H1 (cell line): ENCODE measurements at regions of chr7 and their contacts with region 1.

Region 1: DNA sequence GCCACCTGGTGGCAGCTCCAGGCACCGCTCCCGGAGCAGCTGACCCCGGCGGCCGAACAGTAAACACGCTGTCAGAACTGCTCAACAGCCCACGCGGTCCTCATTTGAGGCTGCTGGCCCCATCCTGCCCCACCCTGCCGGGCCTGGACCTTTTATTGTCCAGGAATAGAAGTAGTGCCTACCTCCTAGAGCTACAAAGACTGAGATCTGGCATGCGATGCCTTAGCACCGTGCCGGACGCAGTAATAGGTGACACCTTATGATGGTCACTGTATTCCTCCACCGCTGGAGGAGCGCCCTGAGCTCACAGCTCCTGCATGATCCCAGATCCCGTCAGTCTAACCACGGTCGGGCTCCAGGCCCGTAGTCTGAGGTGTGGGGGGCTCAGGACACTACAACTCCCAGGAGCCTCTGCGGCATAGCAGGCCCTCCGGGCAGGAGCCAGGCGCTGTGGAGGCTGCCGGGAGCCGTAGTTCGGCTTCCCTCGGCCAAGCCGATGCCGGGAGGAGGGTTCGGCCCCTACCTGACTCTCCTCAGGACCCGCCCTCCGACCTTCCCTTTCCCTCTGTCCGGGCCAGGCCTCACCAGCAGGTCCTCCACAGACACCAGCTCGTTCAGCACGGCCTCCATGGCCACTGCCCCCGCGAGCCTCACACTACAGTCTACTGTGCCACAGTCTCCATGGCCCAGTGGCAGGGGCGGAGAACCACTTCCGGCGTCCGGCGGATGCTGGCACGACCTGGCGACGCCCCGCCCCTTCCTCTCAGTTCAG is at the start of gene FIS1:
- DNase-seq: peak; percentile 76 to 98
- H3K4me3 ChIP-seq: peak within 1 kb of the TSS; percentile 80 to 99 (median 98)
- H3K27ac ChIP-seq: peak within 1 kb of the TSS; percentile 61; the same call in 1 of the 2 replicates
- H3K4me1 ChIP-seq: peaks cover 0 to 6% (median 3%) of the 10 kb centered on the region in 4 experiments; a peak in 5 of 7 replicates
- H3K27me3 ChIP-seq: no peaks in the 10 kb centered on the region
- CTCF ChIP-seq: peak in 2 of 3 experiments; percentile 83 to 91; a peak in 3 of 4 replicates
- EP300 ChIP-seq: no peak
- POLR2A ChIP-seq: no peak
- RAD21 ChIP-seq: peak in 1 of 2 experiments; percentile 54; a peak in 3 of 4 replicates
- total RNA-seq, gene FIS1: 122 and 128 TPM in 2 replicates

Region 2: GRCh38 chr7:101134399-101135030 is 110.0 kb before region 1 on chr7:
- CTCF ChIA-PET with region 1: no interaction called
- POLR2A ChIA-PET with region 1: no interaction called
- DNase-seq: no peak
- H3K4me3 ChIP-seq: no peak overlapping the region; a peak in 2 of 8 replicates
- H3K27ac ChIP-seq: no peak overlapping the region
- H3K4me1 ChIP-seq: peaks cover 2 to 14% (median 6%) of the 10 kb centered on the region in 4 experiments; a peak in 6 of 7 replicates
- H3K27me3 ChIP-seq: peaks cover 0 to 2% (median 0%) of the 10 kb centered on the region in 4 experiments; a peak in 1 of 7 replicates
- CTCF ChIP-seq: no peak
- EP300 ChIP-seq: no peak
- POLR2A ChIP-seq: no peak
- RAD21 ChIP-seq: no peak

Region 3: DNA sequence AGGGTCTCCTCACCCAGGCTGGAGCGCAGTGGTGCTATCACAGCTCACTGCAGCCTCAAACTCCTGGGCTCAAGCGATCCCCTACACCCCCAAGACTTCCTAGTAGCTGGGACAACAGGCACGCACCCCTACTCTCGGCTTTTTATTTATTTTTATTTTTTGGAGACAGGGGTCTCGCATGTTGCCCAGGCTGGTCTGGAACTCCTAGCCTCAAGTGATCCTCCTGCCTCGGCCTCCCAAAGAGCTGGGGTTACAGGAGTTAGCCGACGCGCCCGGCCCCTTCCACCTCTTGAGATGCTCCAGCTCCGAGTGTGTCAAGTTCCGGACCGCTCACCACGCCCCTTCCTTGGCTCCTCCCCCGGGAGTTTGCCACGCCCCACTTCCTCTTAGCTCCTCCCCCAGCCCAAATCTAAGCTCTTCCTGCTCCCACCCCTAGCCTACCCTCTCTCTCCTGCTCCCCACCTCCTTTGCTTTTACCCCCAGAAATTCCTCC is 70.8 kb before region 1 on chr7:
- CTCF ChIA-PET with region 1: interaction called, 10 read pairs
- POLR2A ChIA-PET with region 1: interaction called, 3 read pairs
- DNase-seq: peak in 1 of 2 experiments; percentile 98
- H3K4me3 ChIP-seq: peak overlapping the region; percentile 31 to 68 (median 51); a peak in 7 of 8 replicates
- H3K27ac ChIP-seq: no peak overlapping the region
- H3K4me1 ChIP-seq: peaks cover 6 to 48% (median 34%) of the 10 kb centered on the region in 4 experiments
- H3K27me3 ChIP-seq: peaks cover 64 to 99% (median 91%) of the 10 kb centered on the region in 4 experiments
- CTCF ChIP-seq: no peak
- EP300 ChIP-seq: no peak
- POLR2A ChIP-seq: no peak
- RAD21 ChIP-seq: no peak

Region 4: DNA sequence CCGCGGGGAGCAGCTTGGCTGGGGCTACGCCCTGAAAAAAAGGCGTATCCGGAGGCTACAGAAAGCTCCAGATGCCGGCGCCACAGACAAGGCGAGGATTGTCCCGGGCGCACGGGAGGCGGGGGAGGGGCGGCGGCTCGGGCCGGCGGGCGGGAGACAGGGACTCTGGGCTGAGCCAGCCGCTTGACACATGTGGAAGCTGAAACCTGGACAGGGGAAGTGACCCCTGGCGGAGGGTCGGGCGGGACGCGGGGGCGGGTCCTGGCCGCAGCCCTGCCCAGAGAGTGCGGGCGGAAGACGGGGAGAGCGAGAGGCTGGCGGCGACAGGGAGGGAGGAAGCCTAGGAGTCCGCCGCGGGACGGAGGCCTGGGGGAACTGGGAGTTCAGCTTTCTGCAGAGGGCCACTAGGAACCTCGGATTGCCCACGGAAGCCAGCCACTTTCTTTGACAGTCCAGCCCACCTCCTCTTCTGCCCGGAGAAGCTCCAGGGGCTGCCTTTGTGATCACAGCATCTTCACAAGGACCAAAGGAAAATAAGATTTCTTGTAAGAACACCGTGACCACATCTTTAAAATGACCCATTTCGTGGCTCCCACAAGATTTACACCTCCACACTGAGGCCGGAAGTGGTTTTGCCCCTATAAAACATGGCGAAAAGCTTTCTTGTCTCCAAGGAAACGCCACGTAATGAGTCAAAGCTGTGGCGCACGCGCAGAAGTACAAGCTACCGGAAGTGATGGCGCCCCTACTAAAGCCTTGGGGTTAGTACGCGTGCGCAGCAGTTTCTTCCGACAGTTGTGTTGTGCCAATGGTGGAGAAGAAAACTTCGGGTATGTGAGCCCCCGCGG is 26.9 kb before region 1 on chr7 and contains the starts of genes PLOD3 and ZNHIT1:
- CTCF ChIA-PET with region 1: interaction called, 79 read pairs
- POLR2A ChIA-PET with region 1: interaction called, 28 read pairs
- DNase-seq: peak; percentile 83 to 95
- H3K4me3 ChIP-seq: peak within 1 kb of the TSS; percentile 74 to 83 (median 78)
- H3K27ac ChIP-seq: peak within 1 kb of the TSS; percentile 37; the same call in 1 of the 2 replicates
- H3K4me1 ChIP-seq: peaks cover 0 to 13% (median 7%) of the 10 kb centered on the region in 4 experiments; a peak in 5 of 7 replicates
- H3K27me3 ChIP-seq: no peaks in the 10 kb centered on the region
- CTCF ChIP-seq: peak; percentile 27 to 34 (median 28)
- EP300 ChIP-seq: no peak
- POLR2A ChIP-seq: peak in 1 of 2 experiments; percentile 57; a peak in 2 of 3 replicates
- RAD21 ChIP-seq: peak in 1 of 2 experiments; percentile 28; a peak in 3 of 4 replicates
- total RNA-seq, gene PLOD3: 43.1 and 47.2 TPM in 2 replicates
- total RNA-seq, gene ZNHIT1: 59.9 and 61.7 TPM in 2 replicates

Region 5: DNA sequence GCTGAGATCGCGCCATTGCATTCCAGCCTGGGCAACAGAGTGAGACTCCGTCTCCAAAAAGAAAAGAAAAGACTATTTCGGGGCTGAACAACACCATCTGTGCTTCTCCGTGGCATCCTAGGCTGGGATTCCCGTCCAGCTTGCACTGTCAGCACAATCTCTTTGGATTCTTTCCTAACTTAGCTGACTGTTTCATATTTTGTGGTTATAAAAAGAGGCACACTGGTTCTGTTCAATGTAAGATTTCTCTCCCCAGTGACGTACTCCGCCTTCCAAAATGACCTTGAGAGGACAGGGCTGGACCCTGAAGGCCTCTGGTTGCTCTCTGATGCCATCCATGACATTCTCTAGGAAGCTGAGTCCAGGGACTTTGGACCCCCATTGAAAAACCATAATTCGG is 17.8 kb before region 1 on chr7:
- CTCF ChIA-PET with region 1: interaction called, 69 read pairs
- POLR2A ChIA-PET with region 1: interaction called, 23 read pairs
- DNase-seq: no peak
- H3K4me3 ChIP-seq: no peak overlapping the region
- H3K27ac ChIP-seq: no peak overlapping the region
- H3K4me1 ChIP-seq: peaks cover 0 to 11% (median 1%) of the 10 kb centered on the region in 4 experiments; a peak in 4 of 7 replicates
- H3K27me3 ChIP-seq: no peaks in the 10 kb centered on the region
- CTCF ChIP-seq: no peak
- EP300 ChIP-seq: no peak
- POLR2A ChIP-seq: no peak
- RAD21 ChIP-seq: no peak

Region 6: DNA sequence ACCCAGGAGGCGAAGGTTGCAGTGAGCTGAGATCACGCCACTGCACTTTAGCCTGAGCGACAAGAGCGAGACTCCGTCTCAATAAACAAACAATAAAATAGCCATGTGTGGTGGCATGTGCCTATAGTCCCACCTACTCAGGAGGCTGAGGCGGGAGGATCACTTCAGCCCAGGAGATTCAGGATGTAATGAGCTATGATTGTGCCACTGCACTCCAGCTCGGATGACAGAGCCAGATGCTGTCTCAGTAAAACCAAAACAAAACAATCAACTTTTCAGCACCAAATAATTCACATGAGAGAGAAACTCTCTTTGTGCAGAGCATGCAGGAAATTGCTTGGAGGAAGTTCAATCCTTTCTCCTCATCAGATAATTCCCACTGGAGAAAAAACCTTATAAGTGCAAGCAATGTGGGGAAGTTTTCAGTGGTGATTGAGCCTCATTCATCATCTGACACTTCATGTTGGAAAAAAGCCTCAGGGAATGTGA is 13.7 kb after region 1 on chr7:
- CTCF ChIA-PET with region 1: interaction called, 24 read pairs
- POLR2A ChIA-PET with region 1: interaction called, 10 read pairs
- DNase-seq: no peak
- H3K4me3 ChIP-seq: no peak overlapping the region
- H3K27ac ChIP-seq: no peak overlapping the region
- H3K4me1 ChIP-seq: no peaks in the 10 kb centered on the region
- H3K27me3 ChIP-seq: no peaks in the 10 kb centered on the region; a peak in 1 of 7 replicates
- CTCF ChIP-seq: no peak
- EP300 ChIP-seq: no peak
- POLR2A ChIP-seq: no peak
- RAD21 ChIP-seq: no peak

Region 7: DNA sequence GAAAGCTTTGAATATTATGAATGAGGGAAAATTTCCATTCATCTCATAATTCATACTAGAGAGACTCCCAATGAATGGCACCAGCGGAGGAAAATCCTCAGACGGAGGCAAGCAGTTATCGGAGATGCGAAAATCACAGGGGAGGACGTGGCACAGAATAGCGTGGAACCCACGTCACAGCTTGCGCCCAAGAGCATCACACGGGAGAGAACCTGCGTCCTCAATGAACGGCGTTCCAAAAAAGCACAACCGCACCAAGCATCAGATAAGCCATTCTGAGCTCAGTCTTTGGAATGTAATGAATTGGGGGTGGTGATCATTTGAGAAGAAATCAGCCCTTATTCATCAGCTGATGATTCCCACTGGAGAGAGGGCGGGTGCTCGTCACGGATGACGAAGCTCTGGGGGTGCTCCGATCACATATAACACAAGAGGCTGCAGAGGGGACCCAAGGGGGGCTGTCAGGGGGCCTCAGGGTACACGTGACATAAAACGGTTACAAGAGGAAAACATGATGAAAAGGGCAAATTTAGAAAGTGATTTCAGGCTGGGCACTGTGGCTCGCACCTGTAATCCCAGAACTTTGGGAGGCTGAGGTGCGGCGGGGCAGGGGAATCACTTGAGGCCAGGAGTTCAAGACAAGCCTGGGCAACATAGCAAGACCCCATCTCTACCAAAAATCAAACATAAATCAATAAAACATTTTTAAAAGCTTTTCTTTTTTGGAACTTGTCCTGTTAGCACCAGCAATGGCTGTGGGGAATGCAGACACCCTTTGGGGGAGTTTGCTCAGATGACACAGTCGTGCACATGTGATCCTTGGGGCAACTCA is 34.1 kb after region 1 on chr7:
- CTCF ChIA-PET with region 1: interaction called, 46 read pairs
- POLR2A ChIA-PET with region 1: interaction called, 11 read pairs
- DNase-seq: no peak
- H3K4me3 ChIP-seq: no peak overlapping the region
- H3K27ac ChIP-seq: no peak overlapping the region
- H3K4me1 ChIP-seq: peaks cover 0 to 5% (median 0%) of the 10 kb centered on the region in 4 experiments; a peak in 3 of 7 replicates
- H3K27me3 ChIP-seq: no peaks in the 10 kb centered on the region
- CTCF ChIP-seq: no peak
- EP300 ChIP-seq: no peak
- POLR2A ChIP-seq: no peak; a peak in 1 of 3 replicates
- RAD21 ChIP-seq: no peak

Region 8: DNA sequence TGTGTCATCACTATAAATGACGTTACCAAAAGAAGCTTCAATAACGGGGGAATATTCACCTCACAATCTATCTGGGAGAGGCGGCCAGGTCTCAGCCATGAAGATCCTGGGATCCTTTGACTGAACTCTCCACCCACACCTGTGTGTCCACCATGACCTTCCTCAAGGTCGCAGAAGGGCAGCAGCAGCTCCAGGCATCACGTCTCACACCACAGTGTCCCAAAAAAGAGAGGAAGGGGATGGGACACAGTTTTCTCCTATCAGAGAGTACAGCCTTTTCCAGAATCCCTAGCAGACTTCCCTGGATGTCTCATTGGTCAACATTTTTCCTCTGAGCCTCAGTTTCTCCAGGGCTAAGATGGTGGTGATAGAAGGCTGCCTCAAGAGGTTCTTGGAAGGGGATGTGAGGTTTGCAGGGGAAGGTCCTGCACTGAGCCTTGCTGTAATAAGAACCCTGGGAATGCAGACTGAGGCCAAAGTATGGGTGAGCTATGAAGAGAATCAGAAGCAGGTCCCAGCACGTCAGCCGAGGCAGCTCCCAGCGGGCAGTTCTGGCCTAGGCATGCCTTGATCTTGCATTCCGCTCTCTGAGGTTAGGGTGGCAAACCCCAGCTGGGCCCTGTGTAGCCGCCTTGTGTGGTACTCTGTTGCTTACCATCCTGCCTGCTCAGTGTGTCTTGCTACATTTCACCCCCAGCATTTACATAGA is 181.9 kb after region 1 on chr7:
- CTCF ChIA-PET with region 1: no interaction called
- POLR2A ChIA-PET with region 1: no interaction called
- DNase-seq: no peak
- H3K4me3 ChIP-seq: no peak overlapping the region
- H3K27ac ChIP-seq: no peak overlapping the region
- H3K4me1 ChIP-seq: no peaks in the 10 kb centered on the region
- H3K27me3 ChIP-seq: no peaks in the 10 kb centered on the region
- CTCF ChIP-seq: no peak
- EP300 ChIP-seq: no peak
- POLR2A ChIP-seq: no peak
- RAD21 ChIP-seq: no peak